Activated T-helper 2 cell treated with anti-CD3 and anti-CD28 coated beads, Interferon-gamma antibody, Interleukin-2, Interleukin-4, amounts not matched to agents 10 μg/mL and 5 μg/mL and 100 μg/mL, durations not matched to agents 14 hours and 24 hours and 36 hours (primary cell): ENCODE measurements at regions of chr5 and their contacts with region 1.

Region 1: GRCh38 chr5:59810041-59810440 is 83.5 kb downstream of the PDE4D start:
- DNase-seq: peak; percentile 34
- H3K4me3 Mint-ChIP-seq: no peak overlapping the region
- H3K27ac Mint-ChIP-seq: no peak overlapping the region
- H3K4me1 Mint-ChIP-seq: peaks cover 4% of the 10 kb centered on the region
- H3K27me3 Mint-ChIP-seq: peaks cover 15% of the 10 kb centered on the region

Region 2: GRCh38 chr5:59685793-59686192 is 124.2 kb before region 1 on chr5:
- intact Hi-C with region 1: no loop called
- DNase-seq: no peak
- H3K4me3 Mint-ChIP-seq: no peak overlapping the region
- H3K27ac Mint-ChIP-seq: no peak overlapping the region
- H3K4me1 Mint-ChIP-seq: peaks cover 10% of the 10 kb centered on the region
- H3K27me3 Mint-ChIP-seq: peaks cover 7% of the 10 kb centered on the region

Region 3: DNA sequence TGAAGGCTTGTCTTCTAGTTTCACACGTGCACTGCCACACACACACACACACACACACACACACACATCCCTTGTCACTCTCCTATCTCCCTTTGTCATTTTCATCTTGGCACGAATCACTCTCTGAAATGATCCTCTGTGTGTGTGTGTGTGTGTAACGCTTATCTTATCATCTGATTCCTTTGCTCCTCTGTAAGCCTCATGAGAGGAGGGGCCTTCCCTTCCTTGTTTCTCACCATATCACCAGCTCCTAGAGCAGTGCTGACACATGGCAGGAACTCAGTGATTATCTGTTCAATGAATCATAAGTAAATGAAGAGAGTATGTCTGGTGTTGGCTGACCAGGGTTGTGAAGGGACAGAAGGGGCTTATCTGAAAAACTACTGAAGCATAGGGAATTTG is 30.2 kb after region 1 on chr5:
- intact Hi-C with region 1: no loop called
- DNase-seq: no peak
- H3K4me3 Mint-ChIP-seq: no peak overlapping the region
- H3K27ac Mint-ChIP-seq: no peak overlapping the region
- H3K4me1 Mint-ChIP-seq: no peaks in the 10 kb centered on the region
- H3K27me3 Mint-ChIP-seq: no peaks in the 10 kb centered on the region

Region 4: DNA sequence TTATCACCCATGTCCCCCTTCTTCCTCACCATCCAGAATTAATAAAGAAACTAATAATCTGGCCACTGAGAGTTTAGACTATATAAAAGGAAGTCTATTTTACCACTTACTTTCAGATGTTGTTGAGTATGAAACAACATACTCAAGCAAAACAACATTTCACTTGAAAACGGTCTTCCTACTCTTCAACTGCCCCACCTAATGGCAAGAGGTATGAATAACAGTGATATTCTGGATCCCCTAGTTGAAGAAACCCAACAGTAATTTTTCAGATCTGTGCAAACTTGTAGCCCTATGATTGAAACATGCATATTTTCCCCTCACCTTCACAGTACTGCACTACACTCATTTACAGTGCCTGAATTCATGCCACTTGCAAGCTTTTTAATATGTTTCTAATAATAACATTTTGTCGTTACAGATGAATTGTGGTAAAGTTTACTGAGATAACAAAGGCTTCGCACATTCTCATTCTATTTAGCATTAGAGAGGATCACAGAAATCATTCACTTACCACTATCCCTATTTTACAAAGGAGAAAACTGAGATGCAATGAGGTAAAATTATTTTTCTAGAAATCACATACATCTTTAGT is 351.4 kb after region 1 on chr5:
- intact Hi-C with region 1: loop called (anchors 5 kb)
- DNase-seq: no peak
- H3K4me3 Mint-ChIP-seq: no peak overlapping the region
- H3K27ac Mint-ChIP-seq: no peak overlapping the region
- H3K4me1 Mint-ChIP-seq: no peaks in the 10 kb centered on the region
- H3K27me3 Mint-ChIP-seq: no peaks in the 10 kb centered on the region

Region 5: DNA sequence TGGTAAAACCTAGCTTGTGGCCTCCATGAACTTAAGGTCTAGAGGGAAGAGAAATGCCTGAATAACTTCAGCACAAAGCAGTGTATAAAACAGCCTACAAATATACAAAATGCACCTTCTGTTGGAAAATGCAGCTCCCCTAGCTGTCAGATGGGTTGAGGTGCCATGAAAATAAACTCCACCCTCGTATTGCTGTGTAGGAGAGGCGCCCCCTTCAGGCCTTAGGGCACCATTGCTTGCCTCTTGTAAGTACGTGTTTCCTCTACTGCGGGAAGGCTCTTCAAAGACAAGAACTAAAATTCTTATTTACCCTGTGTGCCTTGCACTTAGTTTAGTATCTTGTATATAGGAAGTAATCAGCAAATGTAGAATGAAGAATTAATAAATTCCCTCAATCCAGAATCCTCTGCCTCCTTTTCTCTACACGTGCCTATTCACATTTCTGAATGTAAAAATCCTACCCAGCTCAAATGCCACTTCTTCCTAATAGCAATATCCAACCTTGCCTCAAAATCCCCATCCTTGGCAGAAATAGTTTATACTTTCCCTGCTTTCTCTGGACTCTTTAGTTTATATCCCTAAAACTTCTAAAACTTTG is 477.2 kb after region 1 on chr5:
- intact Hi-C with region 1: loop called (anchors 2 kb)
- DNase-seq: no peak
- H3K4me3 Mint-ChIP-seq: no peak overlapping the region
- H3K27ac Mint-ChIP-seq: no peak overlapping the region
- H3K4me1 Mint-ChIP-seq: no peaks in the 10 kb centered on the region
- H3K27me3 Mint-ChIP-seq: no peaks in the 10 kb centered on the region

Region 6: DNA sequence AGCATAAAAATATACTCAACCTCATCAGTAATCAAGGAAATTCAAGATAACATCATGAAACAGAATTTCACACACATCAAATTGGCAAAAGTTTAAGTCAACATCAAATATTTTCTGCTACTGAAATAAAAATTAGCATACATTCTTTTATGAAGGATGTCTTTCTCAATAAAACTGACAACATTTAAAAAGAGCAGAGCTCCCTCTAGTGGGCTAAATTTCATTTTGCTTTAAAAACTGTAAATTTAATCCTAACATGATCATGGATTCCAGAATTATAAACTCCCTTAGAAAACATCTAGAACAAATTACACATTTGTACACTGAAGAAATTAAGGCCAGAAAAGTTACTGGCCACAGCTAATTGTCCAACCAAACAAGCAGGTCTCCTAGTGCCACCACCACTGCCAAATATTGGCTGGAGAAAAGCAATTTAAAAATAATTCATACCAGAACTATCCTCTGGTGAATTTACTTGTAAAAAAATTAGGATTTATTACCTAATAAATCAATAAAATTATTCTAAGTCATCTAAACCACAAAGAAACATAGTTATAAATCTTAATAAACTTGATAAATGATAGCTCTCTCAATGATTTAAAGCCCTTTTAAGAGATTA is 858.8 kb after region 1 on chr5:
- intact Hi-C with region 1: loop called (anchors 1 kb)
- DNase-seq: no peak
- H3K4me3 Mint-ChIP-seq: no peak overlapping the region
- H3K27ac Mint-ChIP-seq: no peak overlapping the region
- H3K4me1 Mint-ChIP-seq: peaks cover 1% of the 10 kb centered on the region
- H3K27me3 Mint-ChIP-seq: no peaks in the 10 kb centered on the region